ENCODE measurements at regions of chr1 and their contacts with region 1.

Region 1: DNA sequence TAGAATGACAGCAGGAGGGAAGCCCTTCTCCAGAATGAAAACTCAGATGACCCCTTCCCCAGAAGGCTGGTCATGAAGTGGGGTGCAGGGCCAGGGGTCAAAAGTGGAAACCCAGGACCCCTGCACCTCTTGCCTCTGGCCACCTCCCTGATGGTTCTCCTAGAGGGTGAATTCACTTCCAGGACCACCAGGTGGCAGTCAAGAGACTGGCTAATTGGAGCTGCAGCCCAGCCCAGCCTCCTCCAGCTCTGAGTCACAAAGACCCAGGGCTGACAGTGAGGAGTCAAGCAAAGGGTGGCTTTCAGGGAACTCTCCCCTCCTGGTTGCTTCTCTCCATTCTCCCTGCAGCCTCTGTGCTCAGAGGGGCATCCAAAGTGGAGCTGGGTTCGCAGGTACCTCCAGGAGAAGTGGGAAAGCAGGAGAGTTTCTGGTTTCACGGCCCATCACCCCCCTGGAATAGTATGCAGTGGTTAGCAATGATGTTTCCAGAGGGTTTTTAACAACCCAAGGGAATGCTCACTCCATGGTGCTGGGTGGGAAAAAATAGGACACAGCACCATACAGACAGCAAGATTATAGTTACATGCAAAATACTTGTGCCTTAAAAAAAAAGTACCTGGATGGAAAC is 6.1 kb upstream of the EPHB2 start:
- DNase-seq: peak; percentile 82
- ATAC-seq: peak; percentile 92
- H3K4me3 Mint-ChIP-seq: no peak overlapping the region
- H3K27ac Mint-ChIP-seq: no peak overlapping the region
- H3K4me1 Mint-ChIP-seq: peaks cover 2% of the 10 kb centered on the region
- H3K27me3 Mint-ChIP-seq: peaks cover 37% of the 10 kb centered on the region

Region 2: GRCh38 chr1:22722901-22723550 is 18.5 kb after region 1 on chr1:
- CTCF ChIA-PET with region 1: interaction called, 14 read pairs
- POLR2A ChIA-PET with region 1: interaction called, 3 read pairs
- DNase-seq: no peak
- ATAC-seq: no peak
- H3K4me3 Mint-ChIP-seq: no peak overlapping the region
- H3K27ac Mint-ChIP-seq: no peak overlapping the region
- H3K4me1 Mint-ChIP-seq: no peaks in the 10 kb centered on the region
- H3K27me3 Mint-ChIP-seq: peaks cover 11% of the 10 kb centered on the region

Region 3: DNA sequence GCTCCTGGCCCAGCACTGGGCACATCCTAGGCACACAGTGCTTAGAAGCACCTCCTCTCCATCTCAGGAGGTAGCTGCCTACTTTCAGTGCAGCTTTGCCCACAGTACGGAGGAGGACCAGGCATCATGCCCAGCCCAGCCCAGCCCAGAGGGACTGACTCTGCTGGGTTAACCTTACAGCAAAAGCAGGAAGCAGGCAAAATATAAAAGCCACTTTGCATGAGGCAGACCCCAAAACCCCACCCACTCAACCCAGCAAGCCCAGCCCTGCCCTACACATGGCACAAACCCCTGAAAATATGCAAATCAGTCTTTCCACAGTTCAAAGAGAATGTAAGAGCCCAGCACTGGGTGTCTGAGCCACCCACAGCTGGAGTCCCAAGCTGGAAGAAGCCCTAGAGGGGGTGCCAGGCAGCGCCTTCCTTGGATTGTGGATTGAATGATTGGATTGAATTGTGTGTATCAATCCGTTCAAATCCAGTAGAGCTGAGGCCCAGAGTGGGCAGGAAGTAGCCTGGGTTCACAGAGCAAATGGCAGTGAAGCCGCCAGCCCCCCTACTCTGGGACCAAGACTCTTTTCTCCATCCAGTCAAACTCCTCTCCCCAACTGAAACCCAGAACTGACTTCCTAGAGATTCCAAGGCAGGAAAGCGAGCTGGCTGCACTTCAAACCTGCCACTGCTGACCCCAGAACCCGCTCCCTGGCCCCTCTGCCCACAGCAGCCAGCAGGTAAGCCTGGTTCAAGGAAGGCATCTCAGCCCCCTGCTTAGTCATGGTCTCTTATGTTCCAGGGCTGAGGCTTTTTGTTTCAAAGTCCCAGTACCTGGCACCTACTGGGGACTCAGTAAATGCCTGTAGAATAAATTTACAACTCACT is 150.4 kb after region 1 on chr1:
- CTCF ChIA-PET with region 1: no interaction called
- POLR2A ChIA-PET with region 1: no interaction called
- DNase-seq: no peak
- ATAC-seq: no peak
- H3K4me3 Mint-ChIP-seq: no peak overlapping the region
- H3K27ac Mint-ChIP-seq: no peak overlapping the region
- H3K4me1 Mint-ChIP-seq: no peaks in the 10 kb centered on the region
- H3K27me3 Mint-ChIP-seq: peaks cover 6% of the 10 kb centered on the region

Region 4: GRCh38 chr1:22889213-22889827 is 184.8 kb after region 1 on chr1:
- CTCF ChIA-PET with region 1: interaction called, 35 read pairs
- POLR2A ChIA-PET with region 1: no interaction called
- DNase-seq: peak; percentile 36
- ATAC-seq: peak; percentile 58
- H3K4me3 Mint-ChIP-seq: no peak overlapping the region
- H3K27ac Mint-ChIP-seq: no peak overlapping the region
- H3K4me1 Mint-ChIP-seq: peaks cover 14% of the 10 kb centered on the region
- H3K27me3 Mint-ChIP-seq: peaks cover 23% of the 10 kb centered on the region

Region 5: DNA sequence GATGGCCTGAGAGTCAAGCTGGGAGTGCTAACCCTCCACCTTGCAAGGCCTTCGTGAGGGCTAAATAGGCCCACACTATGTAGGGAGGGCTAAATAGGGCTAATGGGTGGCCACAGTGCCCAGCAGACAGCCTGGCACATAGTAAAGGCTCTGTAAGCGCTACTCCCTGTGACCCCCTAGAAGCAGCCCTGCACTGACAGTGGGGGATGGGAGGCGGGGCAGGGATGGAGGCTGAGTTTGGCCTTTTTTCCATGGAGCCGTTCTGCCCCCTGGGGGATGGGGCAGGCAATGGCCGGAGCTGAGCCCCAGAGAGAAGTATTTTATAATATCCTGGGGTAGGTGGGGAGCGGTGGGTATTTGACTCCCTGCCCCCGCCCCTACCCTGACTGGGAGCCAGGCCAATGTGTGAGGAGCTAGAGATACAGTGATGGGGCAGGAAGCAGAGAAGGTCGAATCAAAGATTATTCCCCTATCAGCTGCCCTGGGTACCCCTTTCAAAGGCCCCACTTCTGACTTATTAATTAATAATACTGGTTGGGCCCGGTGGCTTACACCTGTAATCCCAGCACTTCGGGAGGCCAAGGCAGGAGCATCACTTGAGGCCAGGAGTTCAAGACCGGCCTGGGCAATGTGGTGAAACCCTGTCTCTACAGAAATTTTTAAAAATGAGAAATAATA is 225.8 kb after region 1 on chr1:
- CTCF ChIA-PET with region 1: interaction called, 14 read pairs
- POLR2A ChIA-PET with region 1: no interaction called
- DNase-seq: peak; percentile 31
- ATAC-seq: no peak
- H3K4me3 Mint-ChIP-seq: no peak overlapping the region
- H3K27ac Mint-ChIP-seq: no peak overlapping the region
- H3K4me1 Mint-ChIP-seq: no peaks in the 10 kb centered on the region
- H3K27me3 Mint-ChIP-seq: peaks cover 7% of the 10 kb centered on the region